ENCODE measurements at regions of chr1 and their contacts with region 1.

Region 1: DNA sequence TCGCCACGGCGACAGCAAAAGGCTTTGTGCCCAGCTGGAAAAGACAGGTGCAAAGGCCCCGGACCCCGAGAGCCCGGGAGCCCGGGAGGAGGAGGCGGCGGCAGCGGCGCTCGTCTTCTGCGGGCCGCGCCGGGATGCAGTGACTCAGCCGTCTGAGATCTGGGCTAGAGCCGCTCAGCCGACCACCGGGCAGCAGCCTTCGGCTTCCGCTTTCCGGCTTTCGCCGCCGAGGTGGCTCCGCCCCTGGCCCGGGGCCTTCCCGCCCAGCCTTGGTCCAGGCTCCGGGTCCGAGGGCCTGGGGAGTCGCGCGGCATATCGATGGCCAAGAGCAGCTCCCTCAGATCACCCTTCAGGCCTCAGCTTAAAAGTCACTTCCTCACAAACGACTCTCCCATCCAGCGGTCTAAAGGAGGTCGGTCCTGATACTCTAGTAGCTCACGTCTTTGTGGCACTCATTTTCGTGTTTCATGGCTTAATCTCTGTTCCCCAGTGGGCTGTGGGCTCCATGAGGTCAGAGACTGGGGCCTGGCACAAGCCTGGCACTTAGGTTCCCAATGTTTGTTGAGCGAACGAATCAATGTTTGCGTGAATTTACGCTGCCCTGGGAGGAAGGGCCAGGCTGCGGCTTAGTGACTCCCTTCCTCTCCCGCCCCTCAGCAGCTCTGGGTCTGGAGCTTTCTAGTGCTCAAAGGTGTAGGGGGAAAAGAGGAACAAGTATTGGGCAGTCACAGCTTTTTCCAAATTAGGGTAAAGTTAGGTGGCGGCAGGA is at the start of gene PHTF1:
- DNase-seq: peak; percentile 51
- H3K4me3 ChIP-seq: peak within 1 kb of the TSS; percentile 76
- H3K27ac ChIP-seq: peak within 1 kb of the TSS; percentile 95
- H3K27me3 ChIP-seq: no peaks in the 10 kb centered on the region
- CTCF ChIP-seq: no peak
- polyA plus RNA-seq, gene PHTF1: 15.0 and 18.0 TPM in 2 replicates

Region 2: DNA sequence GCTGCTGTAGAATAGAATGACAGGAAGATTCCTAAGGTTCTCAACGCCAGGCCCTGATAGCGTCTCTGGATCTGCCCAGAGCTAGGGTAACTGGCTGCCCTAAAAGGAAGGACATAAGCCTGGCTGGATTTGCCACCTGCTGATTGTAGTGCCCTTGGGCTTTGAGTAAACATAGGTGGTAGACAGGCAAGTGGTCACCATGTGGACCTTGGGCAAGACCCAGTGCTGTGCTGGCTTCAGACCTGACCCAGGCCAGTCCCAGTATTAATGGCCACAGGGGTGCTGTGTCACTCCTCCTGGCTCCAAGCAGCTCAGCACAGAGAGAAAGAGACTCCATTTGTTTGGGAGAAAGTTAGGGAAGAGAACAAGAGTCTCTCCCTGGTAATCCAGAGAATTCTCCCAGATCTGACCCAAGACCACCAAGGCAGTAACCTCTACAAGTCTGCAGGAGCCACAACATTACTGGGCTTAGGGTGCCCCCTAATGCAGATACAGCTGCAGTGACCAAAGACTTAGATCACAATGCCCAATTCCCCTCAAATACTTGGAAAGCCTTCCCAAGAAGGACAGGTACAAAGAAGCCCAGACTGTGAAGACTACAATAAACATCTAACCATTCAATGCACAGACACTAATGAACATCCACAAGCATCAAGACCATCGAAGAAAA is 44.8 kb before region 1 on chr1:
- CTCF ChIA-PET with region 1: no interaction called
- POLR2A ChIA-PET with region 1: interaction called, 10 read pairs
- DNase-seq: no peak
- H3K4me3 ChIP-seq: no peak overlapping the region
- H3K27ac ChIP-seq: no peak overlapping the region
- H3K27me3 ChIP-seq: no peaks in the 10 kb centered on the region
- CTCF ChIP-seq: no peak

Region 3: DNA sequence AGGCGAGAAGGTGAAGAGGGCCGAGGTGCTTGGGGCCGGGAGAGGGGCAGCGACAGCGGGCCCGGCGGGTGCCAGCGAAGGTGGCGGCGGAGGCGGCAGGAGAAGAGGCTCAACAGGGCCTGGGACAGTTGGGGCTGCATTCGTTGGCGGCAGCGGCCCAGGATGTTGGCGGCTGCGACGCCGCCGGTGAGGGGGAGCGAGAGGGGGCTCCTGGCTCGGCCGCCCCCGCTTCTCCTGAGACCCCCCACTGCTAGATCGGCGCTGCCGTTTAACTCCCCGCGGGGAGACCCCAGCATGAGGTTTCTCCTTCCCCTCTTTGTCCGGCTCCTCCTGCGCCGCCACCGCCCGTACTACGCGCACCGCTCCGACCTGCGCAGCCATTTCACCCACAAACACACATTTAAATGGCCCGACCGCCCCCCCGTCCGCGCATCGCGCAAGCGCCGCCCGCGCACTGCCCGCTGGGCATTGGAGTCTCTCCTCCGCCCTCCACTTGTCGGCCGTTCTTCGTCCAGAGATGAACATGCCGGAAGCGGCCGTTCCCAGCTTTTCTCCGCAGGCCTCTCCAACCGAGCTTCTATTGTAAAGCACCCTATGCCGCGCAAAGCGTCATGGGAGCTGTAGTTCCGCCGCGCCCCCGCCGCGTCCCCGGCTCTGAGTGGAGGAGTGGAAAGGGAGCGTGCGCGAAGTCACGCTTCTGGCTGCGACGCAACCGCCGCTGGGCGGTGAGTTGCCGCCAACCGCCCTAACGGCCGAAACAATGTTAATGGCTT is 52.6 kb after region 1 on chr1 and contains the start of gene RSBN1:
- CTCF ChIA-PET with region 1: no interaction called
- POLR2A ChIA-PET with region 1: interaction called, 19 read pairs
- DNase-seq: peak; percentile 97
- H3K4me3 ChIP-seq: peak within 1 kb of the TSS; percentile 86
- H3K27ac ChIP-seq: peak within 1 kb of the TSS; percentile 70
- H3K27me3 ChIP-seq: no peaks in the 10 kb centered on the region
- CTCF ChIP-seq: no peak
- polyA plus RNA-seq, gene RSBN1: 6.3 and 12.2 TPM in 2 replicates

Region 4: GRCh38 chr1:114903480-114903879 is 1144.0 kb after region 1 on chr1:
- CTCF ChIA-PET with region 1: no interaction called
- POLR2A ChIA-PET with region 1: interaction called, 12 read pairs
- DNase-seq: no peak
- H3K4me3 ChIP-seq: no peak overlapping the region
- H3K27ac ChIP-seq: no peak overlapping the region
- H3K27me3 ChIP-seq: no peaks in the 10 kb centered on the region
- CTCF ChIP-seq: no peak